WTC11 (cell line): ENCODE measurements at regions of chr1 and their contacts with region 1.

Region 1: GRCh38 chr1:68120136-68120791 is 69.8 kb upstream of the DIRAS3 start:
- DNase-seq: peak; percentile 37
- ATAC-seq: peak; percentile 82
- H3K4me3 Mint-ChIP-seq: no peak overlapping the region
- H3K27ac Mint-ChIP-seq: 0 out of 2 replicates have a peak overlapping the region, but pooled peaks have one; percentile 35
- H3K4me1 Mint-ChIP-seq: 0 out of 2 replicates have a peak, but pooled peaks cover 5% of the 10 kb centered on the region
- H3K27me3 Mint-ChIP-seq: no peaks in the 10 kb centered on the region
- CTCF ChIP-seq: peak; percentile 68

Region 2: DNA sequence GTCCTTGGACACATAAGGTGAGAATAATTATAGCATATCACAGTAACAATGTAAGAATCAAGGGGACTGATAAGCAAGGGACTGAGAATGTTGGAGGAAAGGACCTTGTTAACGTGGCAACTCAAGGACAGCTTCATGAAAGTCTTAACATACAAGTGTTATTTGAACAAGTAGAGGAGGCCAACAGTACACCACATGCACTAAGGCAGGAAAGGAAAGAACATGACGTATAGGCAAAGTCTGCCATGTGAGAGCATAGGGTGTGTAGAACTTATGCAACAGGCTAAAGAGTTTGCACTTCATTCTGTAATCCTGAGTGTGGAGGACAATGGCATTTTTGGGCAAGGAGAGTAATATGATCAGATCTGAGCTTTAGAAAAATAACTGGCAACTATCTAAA is 36.6 kb before region 1 on chr1:
- CTCF ChIA-PET with region 1: no interaction called
- POLR2A ChIA-PET with region 1: no interaction called
- DNase-seq: no peak
- ATAC-seq: no peak
- H3K4me3 Mint-ChIP-seq: no peak overlapping the region
- H3K27ac Mint-ChIP-seq: no peak overlapping the region
- H3K4me1 Mint-ChIP-seq: peaks cover 4% of the 10 kb centered on the region
- H3K27me3 Mint-ChIP-seq: no peaks in the 10 kb centered on the region
- CTCF ChIP-seq: no peak

Region 3: DNA sequence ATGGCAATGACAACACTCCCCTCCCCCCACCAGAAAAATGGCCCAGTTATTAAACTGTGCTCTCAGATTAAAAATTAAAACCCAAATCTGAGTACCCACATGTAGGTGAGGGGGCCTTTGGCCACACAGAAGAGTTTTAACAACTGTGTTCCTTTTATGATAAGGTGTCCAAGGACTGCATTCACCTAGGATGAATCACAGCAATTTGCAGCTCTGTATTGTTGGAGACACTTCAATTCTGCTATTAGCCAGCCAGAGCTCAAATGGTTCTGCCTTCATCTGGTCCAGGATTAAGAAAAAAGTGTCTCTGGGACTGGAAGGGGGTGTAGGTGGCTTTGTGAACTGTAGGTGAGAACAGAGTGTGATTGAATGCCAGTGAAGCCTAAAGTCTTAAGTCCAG is 26.5 kb before region 1 on chr1:
- CTCF ChIA-PET with region 1: no interaction called
- POLR2A ChIA-PET with region 1: no interaction called
- DNase-seq: no peak
- ATAC-seq: no peak
- H3K4me3 Mint-ChIP-seq: no peak overlapping the region
- H3K27ac Mint-ChIP-seq: no peak overlapping the region
- H3K4me1 Mint-ChIP-seq: no peaks in the 10 kb centered on the region
- H3K27me3 Mint-ChIP-seq: no peaks in the 10 kb centered on the region; the same call in 1 of the 2 replicates
- CTCF ChIP-seq: no peak

Region 4: GRCh38 chr1:68141071-68142021 is 21.1 kb after region 1 on chr1:
- CTCF ChIA-PET with region 1: interaction called, 11 read pairs
- POLR2A ChIA-PET with region 1: interaction called, 3 read pairs
- DNase-seq: no peak
- ATAC-seq: peak; percentile 71
- H3K4me3 Mint-ChIP-seq: no peak overlapping the region
- H3K27ac Mint-ChIP-seq: peak overlapping the region; percentile 83
- H3K4me1 Mint-ChIP-seq: peaks cover 36% of the 10 kb centered on the region
- H3K27me3 Mint-ChIP-seq: no peaks in the 10 kb centered on the region; the same call in 1 of the 2 replicates
- CTCF ChIP-seq: no peak

Region 5: DNA sequence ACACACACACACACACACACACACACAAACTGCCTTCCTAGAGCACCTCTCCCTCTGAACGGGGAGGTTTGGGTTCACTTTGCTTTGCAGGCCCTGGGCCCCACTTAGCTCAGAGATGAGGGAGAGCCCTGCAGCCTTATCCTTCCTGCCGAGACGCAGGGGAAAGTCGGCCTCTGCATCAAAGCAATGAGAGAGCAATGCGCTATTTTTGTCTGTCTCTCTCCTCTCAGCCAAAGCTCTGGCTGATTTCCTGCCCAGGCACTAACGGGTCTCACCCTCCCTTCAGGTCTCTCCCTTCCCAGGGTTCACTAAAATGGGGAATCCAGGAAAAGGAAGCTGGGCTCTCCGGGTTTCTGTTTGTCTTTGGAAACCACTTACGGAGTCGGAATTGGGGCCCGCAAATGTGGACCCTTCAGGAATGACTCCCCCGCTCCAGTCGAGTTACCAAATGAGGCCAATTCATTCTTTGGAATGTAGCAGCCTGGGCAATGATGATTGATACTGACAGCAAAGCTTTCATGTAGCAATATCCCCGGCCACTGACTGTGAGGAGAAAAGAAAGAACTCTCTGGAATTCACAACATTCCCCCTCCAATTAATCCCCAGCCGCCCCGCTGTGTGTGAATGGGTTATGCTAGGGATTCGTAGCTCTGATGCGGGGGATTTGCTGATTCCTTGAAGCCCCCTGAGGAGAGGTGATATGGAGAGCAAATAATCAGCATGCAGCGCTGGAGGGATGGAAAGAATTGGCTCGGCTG is 173.5 kb after region 1 on chr1:
- CTCF ChIA-PET with region 1: interaction called, 10 read pairs
- POLR2A ChIA-PET with region 1: no interaction called
- DNase-seq: peak; percentile 83
- ATAC-seq: peak; percentile 71
- H3K4me3 Mint-ChIP-seq: peak overlapping the region; percentile 63
- H3K27ac Mint-ChIP-seq: peak overlapping the region; percentile 67
- H3K4me1 Mint-ChIP-seq: peaks cover 47% of the 10 kb centered on the region
- H3K27me3 Mint-ChIP-seq: peaks cover 84% of the 10 kb centered on the region
- CTCF ChIP-seq: no peak

Region 6: DNA sequence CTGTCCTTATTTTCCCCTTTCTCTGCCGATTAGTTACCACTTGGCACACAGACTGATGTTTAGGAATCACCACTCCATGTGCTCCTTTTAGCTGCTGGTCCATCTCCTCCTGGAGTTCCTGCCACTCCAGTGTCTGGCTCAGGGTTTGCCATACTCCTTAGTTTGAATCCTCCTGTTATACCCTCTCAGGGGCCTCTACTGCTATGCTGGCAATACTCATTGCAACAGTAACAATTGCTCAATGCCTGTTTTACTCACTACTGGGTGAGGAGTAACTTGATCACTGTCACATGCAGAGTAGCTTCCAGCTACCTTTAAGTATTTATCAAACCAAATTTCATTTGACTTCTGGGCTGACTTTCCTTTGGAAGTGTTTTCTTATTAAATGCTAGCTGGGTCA is 219.2 kb after region 1 on chr1:
- CTCF ChIA-PET with region 1: interaction called, 75 read pairs
- POLR2A ChIA-PET with region 1: interaction called, 5 read pairs
- DNase-seq: no peak
- ATAC-seq: no peak
- H3K4me3 Mint-ChIP-seq: no peak overlapping the region
- H3K27ac Mint-ChIP-seq: no peak overlapping the region
- H3K4me1 Mint-ChIP-seq: 0 out of 2 replicates have a peak, but pooled peaks cover 2% of the 10 kb centered on the region
- H3K27me3 Mint-ChIP-seq: no peaks in the 10 kb centered on the region; the same call in 1 of the 2 replicates
- CTCF ChIP-seq: no peak

Region 7: GRCh38 chr1:68442822-68443556 is 322.7 kb after region 1 on chr1:
- CTCF ChIA-PET with region 1: interaction called, 11 read pairs
- POLR2A ChIA-PET with region 1: no interaction called
- DNase-seq: peak; percentile 48
- ATAC-seq: peak; percentile 85
- H3K4me3 Mint-ChIP-seq: no peak overlapping the region
- H3K27ac Mint-ChIP-seq: no peak overlapping the region
- H3K4me1 Mint-ChIP-seq: peaks cover 13% of the 10 kb centered on the region
- H3K27me3 Mint-ChIP-seq: no peaks in the 10 kb centered on the region
- CTCF ChIP-seq: peak; percentile 50